OCI-LY7 (cell line): ENCODE measurements at regions of chr6 and their contacts with region 1.

Region 1: GRCh38 chr6:10759312-10759839 is 11.8 kb downstream of the TMEM14B start:
- DNase-seq: peak; percentile 64
- H3K4me3 ChIP-seq: no peak overlapping the region
- H3K27ac ChIP-seq: no peak overlapping the region
- H3K4me1 ChIP-seq: no peaks in the 10 kb centered on the region
- CTCF ChIP-seq: peak; percentile 81

Region 2: GRCh38 chr6:10478187-10479040 is 281.0 kb before region 1 on chr6:
- CTCF ChIA-PET with region 1: no interaction called
- POLR2A ChIA-PET with region 1: interaction called, 6 read pairs
- intact Hi-C with region 1: loop called (anchors 5 kb)
- DNase-seq: peak; percentile 69
- H3K4me3 ChIP-seq: no peak overlapping the region
- H3K27ac ChIP-seq: no peak overlapping the region
- H3K4me1 ChIP-seq: no peaks in the 10 kb centered on the region
- CTCF ChIP-seq: peak; percentile 92

Region 3: DNA sequence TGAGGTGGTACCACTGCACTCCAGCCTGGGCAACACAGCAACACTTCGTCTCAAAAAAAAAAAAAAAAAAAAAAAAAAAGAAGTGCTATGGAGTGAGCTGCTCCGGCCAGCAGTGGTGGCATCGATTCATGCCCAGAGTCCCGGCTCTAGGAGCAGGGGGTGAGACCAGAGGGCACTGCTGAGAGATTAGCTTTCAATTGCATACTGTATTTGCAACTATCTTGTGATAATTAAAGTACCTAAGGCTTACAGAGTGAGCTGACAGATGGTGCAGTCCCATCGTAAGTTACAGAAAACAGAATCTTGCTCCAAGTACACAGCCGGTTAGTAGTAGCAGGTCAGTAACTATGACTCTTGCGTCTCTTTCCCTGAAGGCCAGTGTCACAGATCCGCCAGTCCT is 19.7 kb after region 1 on chr6:
- CTCF ChIA-PET with region 1: no interaction called
- POLR2A ChIA-PET with region 1: no interaction called
- intact Hi-C with region 1: no loop called
- DNase-seq: no peak
- H3K4me3 ChIP-seq: no peak overlapping the region
- H3K27ac ChIP-seq: no peak overlapping the region
- H3K4me1 ChIP-seq: no peaks in the 10 kb centered on the region
- CTCF ChIP-seq: no peak

Region 4: DNA sequence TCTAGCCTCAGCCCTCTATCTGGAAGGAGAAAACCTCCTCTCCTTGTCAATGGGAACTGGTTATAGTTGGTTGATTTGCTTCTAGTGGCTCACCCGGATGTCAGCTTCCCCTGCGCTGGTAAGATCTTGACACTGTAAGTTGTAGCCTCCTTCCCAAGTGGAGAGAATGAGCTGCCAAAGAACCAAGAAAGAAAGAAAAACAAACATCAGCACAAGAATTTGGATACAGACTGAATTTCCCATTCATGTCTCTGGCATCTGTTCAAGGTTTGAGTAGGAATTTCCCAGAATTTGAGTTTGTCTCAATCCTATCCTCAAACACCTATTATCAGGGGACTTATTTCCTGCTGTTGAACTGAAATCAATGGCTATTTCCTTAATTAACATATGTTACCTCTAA is 240.6 kb after region 1 on chr6:
- CTCF ChIA-PET with region 1: no interaction called
- POLR2A ChIA-PET with region 1: no interaction called
- intact Hi-C with region 1: no loop called
- DNase-seq: no peak
- H3K4me3 ChIP-seq: no peak overlapping the region
- H3K27ac ChIP-seq: no peak overlapping the region
- H3K4me1 ChIP-seq: no peaks in the 10 kb centered on the region
- CTCF ChIP-seq: no peak